ENCODE measurements at regions of chr5 and their contacts with region 1.

Region 1: DNA sequence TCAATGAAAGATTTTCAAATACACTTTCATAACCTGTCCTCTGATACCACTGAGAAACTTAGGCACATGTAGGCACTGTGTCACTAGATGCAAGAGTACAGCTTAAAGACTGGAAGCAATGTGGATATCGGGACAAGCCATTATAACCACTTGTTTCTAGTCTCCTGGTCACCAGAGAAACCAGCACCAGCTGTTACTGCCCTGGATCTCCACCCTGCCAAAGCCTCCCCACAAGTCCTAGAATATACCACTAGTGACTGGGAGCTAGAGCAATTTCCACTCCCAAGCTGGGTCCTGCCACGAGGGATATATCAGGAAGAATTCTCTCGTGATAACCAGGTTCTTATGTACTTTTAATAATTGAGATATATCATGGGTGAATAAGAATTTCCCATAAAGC is 19.5 kb downstream of the REEP5 start:
- DNase-seq: no peak
- H3K4me3 ChIP-seq: no peak overlapping the region
- H3K27ac ChIP-seq: no peak overlapping the region
- H3K4me1 ChIP-seq: no peaks in the 10 kb centered on the region
- H3K27me3 ChIP-seq: no peaks in the 10 kb centered on the region
- CTCF ChIP-seq: no peak
- EP300 ChIP-seq: no peak
- POLR2A ChIP-seq: no peak

Region 2: GRCh38 chr5:112863549-112863948 is 39.0 kb before region 1 on chr5:
- in situ Hi-C with region 1: no loop called
- intact Hi-C with region 1: loop called (anchors 1 kb)
- DNase-seq: no peak
- H3K4me3 ChIP-seq: no peak overlapping the region
- H3K27ac ChIP-seq: no peak overlapping the region
- H3K4me1 ChIP-seq: peaks cover 0 to 33% (median 18%) of the 10 kb centered on the region in 4 donors
- H3K27me3 ChIP-seq: no peaks in the 10 kb centered on the region
- CTCF ChIP-seq: no peak
- EP300 ChIP-seq: no peak
- POLR2A ChIP-seq: no peak

Region 3: DNA sequence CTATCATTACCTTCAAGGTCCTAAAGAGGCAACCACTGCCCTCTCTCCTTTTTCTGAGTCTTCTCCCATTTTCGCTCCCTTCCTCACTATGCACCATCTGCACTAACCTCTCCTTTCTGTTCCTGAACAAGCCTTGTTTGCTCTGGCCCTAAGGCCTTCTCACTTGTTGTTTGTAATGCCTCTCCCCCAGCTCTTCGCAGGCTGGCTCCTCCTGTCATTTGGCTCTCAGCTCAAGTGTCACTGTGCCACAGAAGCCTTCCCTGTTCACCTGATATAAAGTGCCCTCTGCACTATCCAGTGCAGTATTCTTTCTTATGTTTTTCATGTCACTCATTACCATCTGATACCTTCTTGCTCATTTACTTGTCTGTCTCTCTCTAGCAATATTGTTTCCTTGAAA is 1763.0 kb after region 1 on chr5:
- in situ Hi-C with region 1: no loop called
- intact Hi-C with region 1: no loop called
- DNase-seq: no peak
- H3K4me3 ChIP-seq: no peak overlapping the region
- H3K27ac ChIP-seq: no peak overlapping the region
- H3K4me1 ChIP-seq: no peaks in the 10 kb centered on the region
- H3K27me3 ChIP-seq: no peaks in the 10 kb centered on the region
- CTCF ChIP-seq: no peak
- EP300 ChIP-seq: no peak
- POLR2A ChIP-seq: no peak

Region 4: GRCh38 chr5:114678778-114679177 is 1776.2 kb after region 1 on chr5:
- in situ Hi-C with region 1: no loop called
- intact Hi-C with region 1: no loop called
- DNase-seq: no peak
- H3K4me3 ChIP-seq: no peak overlapping the region
- H3K27ac ChIP-seq: no peak overlapping the region
- H3K4me1 ChIP-seq: no peaks in the 10 kb centered on the region
- H3K27me3 ChIP-seq: no peaks in the 10 kb centered on the region
- CTCF ChIP-seq: no peak
- EP300 ChIP-seq: no peak
- POLR2A ChIP-seq: no peak